ENCODE measurements at regions of chr17 and their contacts with region 1.

Region 1: GRCh38 chr17:7825206-7825990 is 8.6 kb upstream of the KDM6B start:
- DNase-seq: no peak
- H3K4me3 ChIP-seq: no peak overlapping the region
- H3K27ac ChIP-seq: no peak overlapping the region
- H3K4me1 ChIP-seq: peaks cover 0 to 9% (median 4%) of the 10 kb centered on the region in 4 donors
- H3K27me3 ChIP-seq: no peaks in the 10 kb centered on the region
- CTCF ChIP-seq: no peak
- EP300 ChIP-seq: no peak
- POLR2A ChIP-seq: no peak

Region 2: DNA sequence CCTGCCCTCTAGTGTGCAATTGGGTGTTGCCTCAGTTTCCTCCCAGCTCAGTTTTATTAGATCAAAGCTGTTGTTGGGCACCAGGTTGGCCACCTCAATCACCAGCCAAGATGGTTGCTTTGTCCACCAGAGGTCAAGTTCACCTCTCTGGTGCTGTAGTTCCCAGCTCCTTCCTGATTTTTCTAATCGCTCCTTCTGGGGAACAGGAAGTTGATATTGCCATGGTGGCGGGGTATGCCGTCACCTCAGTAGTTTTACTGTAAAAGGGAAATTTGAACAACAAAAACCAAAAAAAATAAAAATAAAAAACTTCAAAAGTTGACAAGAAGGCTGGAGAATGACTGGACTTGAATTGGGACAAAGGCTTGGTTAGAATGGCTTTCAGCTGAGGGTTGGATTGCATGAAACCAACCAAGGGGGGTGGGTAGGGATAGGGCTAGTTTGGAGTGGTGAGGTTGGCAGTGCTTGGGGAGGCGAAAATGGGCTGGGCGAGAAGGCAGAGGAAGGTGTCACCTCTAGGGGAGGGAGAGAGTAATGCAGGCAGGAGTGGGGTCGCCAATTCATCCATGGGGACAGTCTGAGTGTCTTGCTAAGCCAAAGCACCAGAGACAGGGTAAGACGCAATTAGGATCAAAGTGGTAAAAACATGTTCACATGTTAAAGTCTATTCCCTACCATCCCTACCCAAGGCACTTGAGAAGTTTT is 114.2 kb before region 1 on chr17:
- intact Hi-C with region 1: no loop called
- DNase-seq: no peak
- H3K4me3 ChIP-seq: no peak overlapping the region
- H3K27ac ChIP-seq: no peak overlapping the region
- H3K4me1 ChIP-seq: peaks cover under 1 to 4% (median 1%) of the 10 kb centered on the region in 4 donors
- H3K27me3 ChIP-seq: peaks cover 0 to 100% (median 31%) of the 10 kb centered on the region in 4 donors
- CTCF ChIP-seq: no peak
- EP300 ChIP-seq: no peak
- POLR2A ChIP-seq: no peak

Region 3: DNA sequence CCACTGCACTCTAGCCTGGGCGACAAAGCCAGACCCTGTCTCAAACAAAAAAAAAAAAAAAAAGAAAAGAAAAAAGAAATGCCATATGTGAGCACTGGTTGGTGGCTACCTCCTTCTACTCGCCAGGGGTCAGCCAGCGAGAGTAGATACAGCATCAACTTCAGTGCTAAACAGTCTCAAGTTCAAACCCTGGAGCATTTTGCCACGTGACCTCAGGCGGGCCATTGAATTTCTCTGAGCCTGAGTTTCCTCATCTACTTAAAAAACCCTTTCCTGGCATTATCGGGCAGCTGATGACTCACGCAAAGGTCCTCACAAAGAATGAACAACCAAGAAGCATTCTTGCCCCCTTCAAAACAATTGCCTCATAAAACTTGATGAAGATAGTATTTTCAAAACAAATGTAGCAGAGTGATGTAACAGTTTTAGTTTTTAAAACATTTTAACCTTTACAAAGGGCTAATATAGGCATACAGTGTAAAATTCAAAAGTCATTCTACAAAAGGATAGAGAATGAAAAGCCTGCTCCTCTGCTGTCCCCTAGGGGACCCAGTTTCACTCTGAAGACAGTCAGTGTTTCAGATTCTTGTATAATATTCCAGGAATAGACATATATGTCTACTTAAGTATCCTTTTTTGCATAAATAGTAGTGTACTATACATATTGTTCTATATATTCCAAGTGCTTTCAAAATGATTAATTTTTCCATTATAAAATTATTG is 79.5 kb before region 1 on chr17:
- intact Hi-C with region 1: loop called (anchors 10 kb)
- DNase-seq: no peak
- H3K4me3 ChIP-seq: no peak overlapping the region
- H3K27ac ChIP-seq: no peak overlapping the region
- H3K4me1 ChIP-seq: no peaks in the 10 kb centered on the region
- H3K27me3 ChIP-seq: peaks cover 0 to 23% (median 0%) of the 10 kb centered on the region in 4 donors
- CTCF ChIP-seq: no peak
- EP300 ChIP-seq: no peak
- POLR2A ChIP-seq: no peak

Region 4: DNA sequence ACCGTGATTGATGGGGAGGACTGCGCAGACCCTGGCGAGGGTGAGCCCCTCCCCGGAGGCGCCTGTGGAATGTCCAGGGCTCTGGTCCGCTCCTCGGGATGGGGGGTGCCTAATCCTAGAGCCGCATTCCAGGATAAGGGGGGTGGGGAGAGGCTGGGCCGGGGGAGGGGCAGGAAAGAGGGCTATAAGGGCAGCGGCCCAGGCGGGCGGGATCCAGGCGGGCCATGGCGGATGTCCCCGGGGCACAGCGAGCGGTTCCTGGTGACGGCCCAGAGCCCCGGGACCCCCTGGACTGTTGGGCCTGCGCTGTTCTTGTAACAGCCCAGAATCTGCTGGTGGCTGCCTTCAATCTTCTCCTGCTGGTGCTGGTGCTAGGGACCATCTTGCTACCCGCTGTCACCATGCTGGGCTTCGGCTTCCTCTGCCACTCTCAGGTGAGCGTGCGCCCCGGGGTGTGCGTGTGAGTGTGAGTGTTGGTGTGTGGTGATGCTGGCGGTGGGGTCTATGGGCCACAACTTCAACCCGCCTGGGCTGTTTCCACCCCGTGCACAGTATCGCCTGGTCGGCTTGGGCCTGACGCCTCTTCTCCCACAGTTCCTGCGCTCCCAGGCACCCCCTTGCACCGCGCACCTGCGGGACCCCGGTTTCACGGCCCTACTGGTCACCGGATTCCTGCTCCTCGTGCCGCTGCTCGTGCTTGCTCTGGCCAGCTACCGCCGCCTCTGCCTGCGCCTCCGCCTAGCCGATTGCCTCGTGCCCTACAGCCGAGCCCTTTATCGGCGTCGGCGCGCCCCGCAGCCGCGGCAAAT is 29.7 kb after region 1 on chr17 and contains the start of gene TMEM88:
- intact Hi-C with region 1: loop called (anchors 2 kb)
- DNase-seq: no peak
- H3K4me3 ChIP-seq: peak within 1 kb of the TSS; percentile 69 to 76 (median 74)
- H3K27ac ChIP-seq: peak within 1 kb of the TSS; percentile 91 to 95 (median 94)
- H3K4me1 ChIP-seq: peaks cover 45 to 66% (median 57%) of the 10 kb centered on the region in 4 donors
- H3K27me3 ChIP-seq: no peaks in the 10 kb centered on the region
- CTCF ChIP-seq: no peak
- EP300 ChIP-seq: no peak
- POLR2A ChIP-seq: no peak
- total RNA-seq, gene TMEM88: 13.3 to 45.9 (median 42.5) TPM

Region 5: GRCh38 chr17:7897773-7898172 is 72.4 kb after region 1 on chr17:
- intact Hi-C with region 1: loop called (anchors 5 kb)
- DNase-seq: no peak
- H3K4me3 ChIP-seq: no peak overlapping the region
- H3K27ac ChIP-seq: no peak overlapping the region
- H3K4me1 ChIP-seq: no peaks in the 10 kb centered on the region
- H3K27me3 ChIP-seq: no peaks in the 10 kb centered on the region
- CTCF ChIP-seq: peak; percentile 43 to 73 (median 59)
- EP300 ChIP-seq: no peak
- POLR2A ChIP-seq: no peak